PC-3 (cell line): ENCODE measurements at regions of chr1 and their contacts with region 1.

Region 1: GRCh38 chr1:22075718-22076117 is 23.2 kb downstream of the CDC42 start:
- DNase-seq: no peak
- ATAC-seq: no peak
- H3K4me3 ChIP-seq: no peak overlapping the region
- H3K27ac ChIP-seq: no peak overlapping the region
- H3K4me1 ChIP-seq: no peaks in the 10 kb centered on the region
- H3K27me3 ChIP-seq: no peaks in the 10 kb centered on the region
- CTCF ChIP-seq: no peak

Region 2: GRCh38 chr1:22053017-22053860 is 22.5 kb before region 1 on chr1:
- CTCF ChIA-PET with region 1: no interaction called
- POLR2A ChIA-PET with region 1: interaction called, 14 read pairs
- intact Hi-C with region 1: no loop called
- DNase-seq: peak; percentile 41
- ATAC-seq: peak; percentile 45
- H3K4me3 ChIP-seq: peak overlapping the region; percentile 98
- H3K27ac ChIP-seq: peak overlapping the region; percentile 85
- H3K4me1 ChIP-seq: peaks cover 32% of the 10 kb centered on the region
- H3K27me3 ChIP-seq: no peaks in the 10 kb centered on the region
- CTCF ChIP-seq: no peak